Left ventricle myocardium superior (tissue), 1 donor: ENCODE measurements at regions of chr2 and their contacts with region 1.

Region 1: GRCh38 chr2:120516679-120517314 is 170.9 kb downstream of the INHBB start:
- DNase-seq: no peak
- ATAC-seq: no peak

Region 2: DNA sequence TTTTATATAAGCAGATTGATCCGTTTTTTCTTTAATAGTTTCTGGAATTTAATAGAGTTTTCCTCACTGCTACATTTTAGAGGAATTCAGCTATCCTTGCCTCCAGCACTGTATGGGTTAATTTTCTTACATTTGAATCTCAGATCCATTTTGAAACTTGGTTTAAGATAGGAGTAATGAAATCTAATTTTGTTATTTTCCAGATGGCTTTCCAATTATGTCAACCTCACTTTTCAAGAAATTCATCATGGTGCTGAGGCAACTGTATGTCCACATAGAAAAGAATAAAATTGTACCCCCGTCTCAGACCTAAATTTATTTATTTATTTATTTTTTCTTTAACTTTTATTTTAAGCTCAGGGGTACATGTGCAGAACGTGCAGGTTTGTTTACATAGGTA is 398.8 kb before region 1 on chr2:
- intact Hi-C with region 1: no loop called
- DNase-seq: no peak
- ATAC-seq: no peak

Region 3: DNA sequence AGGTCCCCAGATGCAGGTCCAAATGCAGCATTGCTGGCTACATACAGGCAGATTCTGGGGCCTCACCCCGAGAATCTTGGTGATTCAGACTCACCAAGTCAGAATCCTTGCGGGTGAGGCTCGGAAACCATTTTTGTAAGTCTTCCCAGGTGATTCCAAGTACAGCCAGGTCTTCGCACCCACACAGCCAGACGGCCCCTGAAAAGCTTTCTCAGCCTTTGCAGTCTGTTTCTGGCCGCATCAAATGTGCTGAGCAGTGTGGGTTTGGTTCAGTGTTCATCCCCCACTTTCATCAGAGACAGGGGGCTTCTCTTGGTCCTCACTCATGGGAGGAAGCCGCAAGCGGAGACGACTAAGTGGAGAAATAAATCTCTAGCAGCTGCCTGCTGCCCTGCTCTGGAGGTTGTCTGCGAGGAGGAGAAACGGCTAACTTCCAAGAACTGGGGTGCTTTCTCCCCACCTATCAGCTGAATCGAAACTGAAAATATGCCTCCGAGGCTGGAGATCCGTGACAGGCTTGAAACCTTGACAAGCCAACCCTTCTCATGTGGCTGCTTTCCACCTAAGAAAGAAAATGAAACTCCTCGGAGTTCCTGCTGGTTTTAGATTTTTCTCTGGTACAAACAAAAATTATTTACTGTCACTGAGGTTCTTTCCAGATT is 284.7 kb before region 1 on chr2:
- intact Hi-C with region 1: no loop called
- DNase-seq: no peak
- ATAC-seq: peak; percentile 39

Region 4: DNA sequence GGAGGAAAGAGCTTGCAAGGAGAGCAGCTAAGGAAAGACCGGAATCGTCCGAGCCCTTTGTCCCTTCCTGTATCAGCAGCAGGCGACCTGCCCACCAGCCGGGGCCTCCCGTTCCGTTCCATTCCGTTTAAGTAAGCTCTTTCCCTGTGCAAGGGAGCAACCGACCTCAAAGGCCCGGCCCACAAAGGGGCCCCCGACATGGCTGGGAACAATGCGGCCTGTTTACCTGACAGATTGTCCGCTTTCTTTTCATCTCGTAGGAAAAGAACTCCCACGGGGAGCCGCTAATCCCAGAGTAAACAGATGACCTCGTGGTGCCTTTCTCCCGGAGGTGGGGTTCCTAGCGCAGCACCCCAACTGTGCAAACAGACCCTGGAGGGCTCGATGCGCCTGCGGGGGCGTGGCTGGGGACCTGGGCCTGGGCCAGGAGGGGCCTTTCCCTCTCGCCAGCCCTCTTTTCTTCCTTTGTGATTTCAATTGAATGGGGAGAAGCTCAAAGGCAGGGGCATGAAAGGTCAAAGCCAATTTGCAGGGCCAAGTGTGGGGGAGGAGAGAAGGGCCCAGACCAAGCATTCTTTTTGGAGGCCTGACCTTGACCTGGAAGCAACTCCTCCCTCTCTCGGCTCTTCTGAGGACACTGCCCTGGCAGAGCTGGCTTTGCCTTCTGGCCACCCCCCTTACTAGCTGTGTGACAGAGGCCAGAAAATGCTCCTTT is 50.7 kb before region 1 on chr2:
- intact Hi-C with region 1: loop called (anchors 2 kb)
- DNase-seq: no peak
- ATAC-seq: no peak